Psoas muscle (tissue), 8 donors: ENCODE measurements at regions of chr17 and their contacts with region 1.

Region 1: DNA sequence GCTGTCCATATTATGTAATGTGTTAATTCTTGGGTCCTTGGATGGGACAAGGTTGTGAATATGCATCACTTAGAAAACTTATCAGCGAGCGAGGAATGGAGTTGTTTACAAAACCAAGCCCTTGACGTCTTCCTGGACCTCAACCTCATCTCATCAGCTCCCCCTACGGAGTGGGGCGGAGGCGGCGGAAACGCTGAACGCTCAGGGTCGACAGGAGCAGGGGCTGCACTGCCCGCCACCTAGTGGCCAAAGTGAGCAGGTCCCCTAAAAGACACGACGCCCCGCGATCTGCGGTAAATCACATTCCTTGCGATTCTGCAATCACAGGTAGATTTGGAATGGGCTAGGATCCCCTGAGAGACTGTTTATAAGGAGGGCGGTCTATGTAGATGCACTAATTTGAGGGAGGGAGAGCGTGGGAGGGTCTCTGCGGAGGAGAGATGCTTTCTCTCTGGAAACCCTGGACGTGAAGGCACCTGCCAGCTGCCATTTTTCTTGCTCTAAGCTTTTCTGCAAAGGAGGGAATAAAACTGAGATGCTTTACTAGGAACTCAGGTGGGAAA is 5.4 kb upstream of the ICAM2 start:
- DNase-seq: peak; percentile 79 to 93
- ATAC-seq: peak; percentile 83 to 93 (median 88)
- H3K4me3 ChIP-seq: peak overlapping the region; percentile 53
- H3K27ac ChIP-seq: no peak overlapping the region
- H3K4me1 ChIP-seq: peaks cover 4% of the 10 kb centered on the region
- H3K27me3 ChIP-seq: no peaks in the 10 kb centered on the region
- CTCF ChIP-seq: peak; percentile 92

Region 2: GRCh38 chr17:63911657-63912426 is 114.0 kb before region 1 on chr17:
- intact Hi-C with region 1: loop called in 1 of 2 experiments (anchors 5 kb)
- DNase-seq: no peak
- ATAC-seq: peak; percentile 81 to 89 (median 82)
- H3K4me3 ChIP-seq: no peak overlapping the region
- H3K27ac ChIP-seq: no peak overlapping the region
- H3K4me1 ChIP-seq: no peaks in the 10 kb centered on the region
- H3K27me3 ChIP-seq: no peaks in the 10 kb centered on the region
- CTCF ChIP-seq: peak; percentile 84

Region 3: GRCh38 chr17:63919311-63919723 is 106.5 kb before region 1 on chr17:
- intact Hi-C with region 1: loop called (anchors 2 to 5 kb)
- DNase-seq: peak; percentile 47 to 65
- ATAC-seq: peak; percentile 87 to 97 (median 92)
- H3K4me3 ChIP-seq: no peak overlapping the region
- H3K27ac ChIP-seq: no peak overlapping the region
- H3K4me1 ChIP-seq: no peaks in the 10 kb centered on the region
- H3K27me3 ChIP-seq: no peaks in the 10 kb centered on the region
- CTCF ChIP-seq: peak; percentile 95

Region 4: DNA sequence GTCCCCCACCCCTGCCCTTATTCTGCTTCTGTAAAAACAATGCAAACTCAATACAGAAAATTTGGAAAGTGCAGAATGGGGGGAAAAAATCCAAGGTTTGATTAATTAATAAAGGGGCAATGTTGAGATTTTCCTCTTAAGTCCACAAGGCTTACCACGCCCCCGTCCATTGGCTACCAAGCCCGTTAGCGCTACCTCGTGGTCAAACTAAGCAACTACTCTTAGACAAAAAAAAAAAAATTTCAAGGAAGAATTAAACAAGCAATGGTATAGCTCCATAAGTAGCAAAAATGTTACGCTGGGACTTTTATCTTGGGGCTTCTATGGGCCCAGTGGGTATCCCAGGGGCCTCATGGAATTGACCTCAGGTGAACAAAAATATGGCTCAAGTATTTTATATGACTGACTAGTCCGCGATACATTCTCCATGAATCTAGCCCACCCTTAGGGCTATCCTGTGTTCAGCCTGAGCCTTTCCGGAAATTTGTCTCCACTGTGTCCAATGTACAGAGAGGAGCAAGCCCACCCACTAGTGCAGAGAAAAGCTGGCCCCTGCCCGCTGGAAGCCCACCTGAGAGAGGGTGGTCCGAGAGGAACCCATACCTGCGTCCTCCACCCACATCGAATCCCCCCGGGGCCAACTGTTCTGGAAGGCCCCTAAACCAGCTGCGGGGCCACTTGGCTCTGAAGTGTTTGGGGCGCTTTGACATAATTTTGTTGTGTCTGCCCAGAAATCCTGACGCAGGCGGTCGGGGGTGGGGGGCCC is 256.3 kb after region 1 on chr17:
- intact Hi-C with region 1: loop called (anchors 2 to 5 kb)
- DNase-seq: peak; percentile 37 to 59
- ATAC-seq: peak; percentile 48 to 71 (median 65)
- H3K4me3 ChIP-seq: peak overlapping the region; percentile 35
- H3K27ac ChIP-seq: peak overlapping the region; percentile 51
- H3K4me1 ChIP-seq: peaks cover 28% of the 10 kb centered on the region
- H3K27me3 ChIP-seq: no peaks in the 10 kb centered on the region
- CTCF ChIP-seq: peak; percentile 87